Aorta (tissue), 5 donors: ENCODE measurements at regions of chr3 and their contacts with region 1.

Region 1: DNA sequence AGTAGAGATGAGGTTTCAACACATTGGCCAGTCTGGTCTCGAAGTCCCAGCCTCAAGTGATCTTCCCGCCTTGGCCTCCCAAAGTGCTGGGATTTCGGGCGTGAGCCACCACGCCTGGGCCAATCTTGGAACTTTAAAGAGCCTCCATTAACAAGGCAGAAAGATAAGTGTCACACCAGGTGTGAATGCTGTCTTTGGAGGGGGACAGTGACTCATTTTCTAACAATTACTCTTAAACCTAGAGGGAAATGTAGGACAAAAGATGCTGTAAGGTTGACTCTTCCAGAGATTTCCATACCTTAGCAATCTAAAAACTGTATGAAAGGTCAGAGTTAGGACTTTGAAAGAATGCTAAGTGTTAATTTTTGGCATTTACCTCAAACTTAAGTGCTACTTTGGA is 84.9 kb downstream of the FNDC3B start:
- DNase-seq: no peak
- ATAC-seq: no peak
- H3K4me3 ChIP-seq: no peak overlapping the region
- H3K27ac ChIP-seq: no peak overlapping the region
- H3K4me1 ChIP-seq: peaks cover 13 to 14% of the 10 kb centered on the region in 2 donors
- H3K27me3 ChIP-seq: no peaks in the 10 kb centered on the region

Region 2: GRCh38 chr3:172046268-172046915 is 77.9 kb before region 1 on chr3:
- intact Hi-C with region 1: loop called in 1 of 2 experiments (anchors 5 kb)
- DNase-seq: no peak
- ATAC-seq: no peak
- H3K4me3 ChIP-seq: peak overlapping the region in 1 of 2 donors; percentile 8
- H3K27ac ChIP-seq: peak overlapping the region; percentile 25 to 28
- H3K4me1 ChIP-seq: peaks cover 4 to 11% of the 10 kb centered on the region in 2 donors
- H3K27me3 ChIP-seq: no peaks in the 10 kb centered on the region

Region 3: GRCh38 chr3:172138795-172139441 is 14.6 kb after region 1 on chr3:
- intact Hi-C with region 1: no loop called
- DNase-seq: peak in 1 of 2 donors; percentile 62
- ATAC-seq: no peak
- H3K4me3 ChIP-seq: no peak overlapping the region
- H3K27ac ChIP-seq: no peak overlapping the region
- H3K4me1 ChIP-seq: peaks cover 10 to 12% of the 10 kb centered on the region in 2 donors
- H3K27me3 ChIP-seq: no peaks in the 10 kb centered on the region

Region 4: GRCh38 chr3:172177046-172177445 is 52.8 kb after region 1 on chr3:
- intact Hi-C with region 1: no loop called
- DNase-seq: no peak
- ATAC-seq: no peak
- H3K4me3 ChIP-seq: no peak overlapping the region
- H3K27ac ChIP-seq: no peak overlapping the region
- H3K4me1 ChIP-seq: peaks cover 8 to 23% of the 10 kb centered on the region in 2 donors
- H3K27me3 ChIP-seq: no peaks in the 10 kb centered on the region